Panc1 (cell line): ENCODE measurements at regions of chr9 and their contacts with region 1.

Region 1: DNA sequence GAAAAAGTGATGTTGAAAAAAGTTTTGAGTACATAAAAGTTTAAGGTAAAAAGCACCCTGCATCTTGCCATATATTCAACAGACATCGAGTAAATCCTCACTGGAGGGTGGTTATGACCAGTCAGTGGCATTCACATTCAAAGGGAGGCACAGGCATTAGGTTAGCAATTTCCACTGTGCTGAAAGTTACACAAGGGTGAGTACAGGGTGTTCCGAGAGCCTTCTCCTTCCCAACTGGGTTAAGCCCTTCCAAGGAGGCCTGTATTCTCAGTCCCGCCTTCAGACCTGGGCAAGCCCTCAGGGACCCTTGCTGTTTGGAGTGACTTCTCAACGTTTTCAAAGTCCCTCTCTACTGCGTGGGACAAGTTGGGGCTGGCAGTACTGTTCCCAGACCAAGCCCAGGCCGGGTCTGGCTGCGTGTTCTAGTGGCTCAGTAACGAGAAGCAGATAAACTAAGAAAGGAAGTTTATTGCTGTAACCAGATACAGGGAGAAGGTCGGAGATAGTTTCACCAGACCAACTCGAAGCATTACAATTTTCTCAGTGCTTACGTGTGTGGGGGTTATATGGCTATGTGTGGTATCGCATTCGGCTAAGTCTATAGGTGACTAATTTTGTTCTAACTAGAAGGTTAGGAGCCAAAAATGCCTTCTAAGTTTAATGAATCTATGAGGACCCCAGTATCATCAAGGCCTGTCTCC is 13.0 kb upstream of the SETX start:
- DNase-seq: no peak
- ATAC-seq: no peak
- H3K4me3 ChIP-seq: no peak overlapping the region
- H3K27ac ChIP-seq: no peak overlapping the region
- H3K4me1 ChIP-seq: no peaks in the 10 kb centered on the region
- H3K27me3 ChIP-seq: no peaks in the 10 kb centered on the region
- CTCF ChIP-seq: no peak

Region 2: DNA sequence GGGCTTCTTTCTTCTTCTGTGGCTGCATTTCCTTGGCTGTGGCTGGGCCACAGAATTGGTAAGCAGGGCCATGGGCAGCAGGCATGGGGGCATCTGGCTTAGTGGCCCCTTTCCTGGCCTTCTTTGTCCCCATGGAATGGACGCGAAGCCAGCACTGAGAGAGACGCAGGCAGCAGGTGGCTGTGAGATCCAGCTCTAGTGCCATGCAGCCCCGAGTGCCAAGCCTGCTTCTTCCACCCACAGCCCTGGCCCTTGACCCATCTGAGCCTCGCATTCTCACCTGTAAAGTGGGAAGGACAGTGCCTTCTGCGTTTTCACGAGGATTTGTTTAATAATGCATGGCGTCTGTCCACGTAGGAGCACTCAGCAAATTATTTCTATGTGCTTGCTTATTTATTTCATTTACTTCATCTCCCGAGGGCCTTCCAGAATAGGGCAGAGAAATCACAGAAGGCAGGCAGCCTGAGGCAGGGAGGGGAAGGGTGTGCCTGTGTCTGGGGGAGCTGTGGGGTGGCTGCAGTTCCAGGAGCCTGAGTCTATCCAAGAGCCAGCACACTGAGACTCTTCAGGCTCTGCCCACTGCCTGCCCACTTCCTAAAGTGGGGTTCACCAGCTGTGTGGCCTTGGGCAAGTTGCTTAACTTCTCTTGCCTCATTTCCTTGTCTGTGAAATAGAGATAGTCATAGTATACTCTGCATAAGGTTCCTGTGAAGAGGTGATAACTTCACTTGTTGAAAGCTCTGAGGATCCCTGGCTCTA is 150.7 kb before region 1 on chr9:
- CTCF ChIA-PET with region 1: no interaction called
- POLR2A ChIA-PET with region 1: no interaction called
- in situ Hi-C with region 1: no loop called
- intact Hi-C with region 1: no loop called
- DNase-seq: no peak
- ATAC-seq: no peak
- H3K4me3 ChIP-seq: no peak overlapping the region
- H3K27ac ChIP-seq: no peak overlapping the region
- H3K4me1 ChIP-seq: no peaks in the 10 kb centered on the region; the same call in 1 of the 2 replicates
- H3K27me3 ChIP-seq: no peaks in the 10 kb centered on the region
- CTCF ChIP-seq: no peak

Region 3: DNA sequence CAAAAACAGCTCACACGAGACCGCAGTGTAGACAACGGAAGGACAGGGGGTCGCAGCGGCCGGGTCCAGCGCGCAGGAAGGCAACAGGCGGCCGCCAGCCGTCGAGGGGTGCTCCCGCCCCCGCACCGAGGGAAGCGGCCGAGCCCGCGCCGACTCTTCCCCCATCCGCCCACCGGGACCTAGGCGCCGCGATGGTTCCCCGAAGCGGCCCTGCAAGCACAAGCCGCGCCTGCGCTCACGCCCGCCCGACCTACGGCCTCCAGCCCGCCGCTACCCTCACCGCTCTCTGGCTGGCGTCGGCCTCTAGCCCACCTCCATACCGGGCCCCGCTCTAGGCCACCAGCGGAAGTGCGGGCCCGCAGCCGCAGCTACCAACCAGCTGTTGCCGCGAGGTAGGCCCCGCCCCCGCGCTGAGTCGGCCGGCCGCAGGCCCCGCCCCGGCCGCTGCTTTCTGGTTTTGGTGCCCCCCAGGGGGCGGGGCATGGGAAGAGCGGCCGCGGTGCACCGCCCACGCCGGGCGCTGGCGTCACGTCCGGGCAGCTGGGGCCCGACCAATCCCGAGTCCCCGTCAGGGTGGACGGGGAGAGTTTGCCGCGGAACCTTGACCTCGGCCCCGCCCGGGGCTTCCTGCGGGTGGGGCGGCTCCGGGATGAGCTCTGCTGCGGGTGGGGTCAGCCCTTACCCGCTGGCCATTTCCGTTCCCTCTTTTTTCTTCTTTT is 13.0 kb before region 1 on chr9 and contains the start of gene SETX:
- CTCF ChIA-PET with region 1: no interaction called
- POLR2A ChIA-PET with region 1: interaction called, 14 read pairs
- in situ Hi-C with region 1: no loop called
- intact Hi-C with region 1: no loop called
- DNase-seq: peak; percentile 76
- ATAC-seq: peak; percentile 99
- H3K4me3 ChIP-seq: peak within 1 kb of the TSS; percentile 82 to 86
- H3K27ac ChIP-seq: peak within 1 kb of the TSS; percentile 98
- H3K4me1 ChIP-seq: peaks cover 20% of the 10 kb centered on the region; the same call in 1 of the 2 replicates
- H3K27me3 ChIP-seq: no peaks in the 10 kb centered on the region
- CTCF ChIP-seq: no peak
- total RNA-seq, gene SETX: 28.1 TPM

Region 4: DNA sequence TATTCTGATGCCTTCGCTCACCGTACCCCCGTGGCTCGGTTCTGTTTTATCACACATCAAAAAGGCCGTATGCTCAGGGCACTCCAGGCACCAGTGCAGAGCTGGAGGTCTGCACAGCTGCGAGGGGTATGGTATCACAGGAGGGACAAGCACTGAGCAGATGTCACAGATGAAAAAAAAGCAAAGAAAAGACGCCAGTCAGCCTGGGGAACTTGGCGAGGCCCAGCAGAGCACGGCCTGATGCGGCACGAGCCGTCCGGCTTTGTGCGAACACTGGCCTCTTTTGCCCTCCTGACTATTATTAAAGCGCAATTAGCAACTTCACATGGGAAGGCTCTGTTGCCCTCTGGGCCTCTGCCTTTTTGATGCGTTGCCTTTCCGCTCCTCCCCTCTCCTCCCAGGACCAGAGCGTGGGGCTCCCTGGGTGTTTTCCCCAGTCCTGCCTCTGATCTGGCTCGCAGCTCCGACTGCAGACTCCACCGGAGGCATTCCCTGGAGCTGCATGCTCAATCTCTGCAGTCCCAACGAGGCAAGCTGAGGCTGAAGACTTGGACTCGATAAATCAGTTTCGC is 465.9 kb after region 1 on chr9:
- CTCF ChIA-PET with region 1: no interaction called
- POLR2A ChIA-PET with region 1: no interaction called
- in situ Hi-C with region 1: no loop called
- intact Hi-C with region 1: no loop called
- DNase-seq: no peak
- ATAC-seq: no peak
- H3K4me3 ChIP-seq: no peak overlapping the region
- H3K27ac ChIP-seq: no peak overlapping the region
- H3K4me1 ChIP-seq: no peaks in the 10 kb centered on the region; the same call in 1 of the 2 replicates
- H3K27me3 ChIP-seq: 0 out of 2 replicates have a peak, but pooled peaks cover 2% of the 10 kb centered on the region
- CTCF ChIP-seq: no peak